ENCODE measurements at regions of chr6 and their contacts with region 1.

Region 1: DNA sequence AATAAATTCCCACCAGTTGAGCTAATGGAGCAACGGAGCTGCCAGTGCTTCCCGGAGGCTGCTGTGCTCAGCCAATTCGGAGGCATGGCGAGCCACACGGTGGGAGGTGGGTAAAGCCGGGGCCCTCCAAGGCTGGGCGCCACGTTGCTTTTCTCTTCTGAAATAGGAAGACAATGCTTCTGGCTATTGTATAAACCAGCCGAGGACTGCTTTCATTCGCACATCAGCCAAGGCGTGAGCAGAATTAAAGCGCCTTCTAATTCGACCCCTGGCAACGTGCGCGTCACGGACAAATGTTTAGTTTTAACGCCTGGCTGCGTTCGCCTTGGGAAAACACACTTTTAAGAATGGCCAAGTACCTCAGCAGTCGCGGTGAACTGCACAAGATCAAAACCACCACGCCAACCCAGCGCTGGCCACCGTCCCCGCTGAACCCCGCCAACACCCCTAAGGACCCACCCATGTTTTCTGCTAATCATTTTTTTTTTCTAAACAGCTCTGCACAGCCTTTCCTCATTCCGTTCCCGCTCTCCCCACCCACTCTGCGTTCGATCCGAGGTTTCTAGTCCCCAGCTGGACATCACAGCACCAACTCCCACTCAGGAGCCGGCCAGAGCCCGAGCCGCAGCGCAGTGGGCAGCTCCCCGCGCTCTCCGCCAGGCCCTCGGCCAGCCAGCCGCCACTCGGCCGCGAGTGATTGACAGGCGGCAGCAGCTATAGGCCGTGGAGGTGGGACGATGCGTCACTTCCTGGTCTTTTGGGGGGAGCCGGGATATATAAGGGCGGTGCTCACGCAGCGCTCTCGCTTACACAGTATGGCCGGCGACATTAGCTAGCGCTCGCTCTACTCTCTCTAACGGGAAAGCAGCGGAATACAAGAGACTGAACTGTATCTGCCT is at the start of gene AMD1:
- DNase-seq: peak; percentile 92
- ATAC-seq: peak; percentile 81
- H3K4me3 ChIP-seq: peak within 1 kb of the TSS; percentile 96
- H3K27ac ChIP-seq: peak within 1 kb of the TSS; percentile 60
- H3K4me1 ChIP-seq: peaks cover 7% of the 10 kb centered on the region
- H3K27me3 ChIP-seq: no peaks in the 10 kb centered on the region
- CTCF ChIP-seq: no peak
- total RNA-seq, gene AMD1: 56.2 and 72.5 TPM in 2 replicates

Region 2: GRCh38 chr6:110618591-110619267 is 255.5 kb before region 1 on chr6:
- CTCF ChIA-PET with region 1: interaction called, 3 read pairs
- POLR2A ChIA-PET with region 1: no interaction called
- intact Hi-C with region 1: loop called (anchors 2 kb)
- DNase-seq: peak; percentile 57
- ATAC-seq: peak; percentile 89
- H3K4me3 ChIP-seq: no peak overlapping the region
- H3K27ac ChIP-seq: peak overlapping the region; percentile 58
- H3K4me1 ChIP-seq: peaks cover 22% of the 10 kb centered on the region
- H3K27me3 ChIP-seq: no peaks in the 10 kb centered on the region
- CTCF ChIP-seq: peak; percentile 67

Region 3: GRCh38 chr6:110654096-110654820 is 220.0 kb before region 1 on chr6:
- CTCF ChIA-PET with region 1: interaction called, 18 read pairs
- POLR2A ChIA-PET with region 1: interaction called, 8 read pairs
- intact Hi-C with region 1: no loop called
- DNase-seq: peak; percentile 82
- ATAC-seq: peak; percentile 85
- H3K4me3 ChIP-seq: no peak overlapping the region
- H3K27ac ChIP-seq: peak overlapping the region; percentile 92
- H3K4me1 ChIP-seq: peaks cover 43% of the 10 kb centered on the region
- H3K27me3 ChIP-seq: no peaks in the 10 kb centered on the region
- CTCF ChIP-seq: no peak

Region 4: GRCh38 chr6:110815217-110816109 is 58.8 kb before region 1 on chr6 and contains the start of gene CDK19:
- CTCF ChIA-PET with region 1: interaction called, 6 read pairs
- POLR2A ChIA-PET with region 1: interaction called, 33 read pairs
- intact Hi-C with region 1: loop called (anchors 1 kb)
- DNase-seq: peak; percentile 96
- ATAC-seq: peak; percentile 87
- H3K4me3 ChIP-seq: peak within 1 kb of the TSS; percentile 94
- H3K27ac ChIP-seq: peak within 1 kb of the TSS; percentile 86
- H3K4me1 ChIP-seq: peaks cover 29% of the 10 kb centered on the region
- H3K27me3 ChIP-seq: no peaks in the 10 kb centered on the region
- CTCF ChIP-seq: no peak
- total RNA-seq, gene CDK19: 4.2 and 5.4 TPM in 2 replicates

Region 5: DNA sequence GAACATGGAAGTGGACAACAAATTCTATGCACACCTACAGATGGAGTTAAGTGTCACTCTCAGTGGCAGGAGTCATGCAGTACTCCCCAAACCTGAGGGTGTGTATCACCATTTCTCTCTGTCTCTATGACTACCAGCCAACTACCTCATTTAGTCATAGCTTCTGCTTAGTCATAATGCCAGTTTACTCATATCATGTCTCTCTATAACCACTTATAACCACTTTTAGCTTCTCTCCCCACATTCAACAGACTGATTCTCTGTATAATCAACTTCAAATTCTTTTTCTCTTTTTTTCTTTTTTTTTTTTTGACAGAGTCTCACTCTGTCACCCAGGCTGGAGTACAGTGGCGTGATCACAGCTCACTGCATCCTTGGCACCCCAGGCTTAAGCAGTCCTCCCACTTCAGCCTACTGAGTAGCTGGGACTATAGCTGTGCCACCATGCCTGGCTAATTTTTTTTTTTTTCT is 70.5 kb after region 1 on chr6:
- CTCF ChIA-PET with region 1: no interaction called
- POLR2A ChIA-PET with region 1: interaction called, 5 read pairs
- intact Hi-C with region 1: loop called (anchors 2 kb)
- DNase-seq: peak; percentile 89
- ATAC-seq: peak; percentile 99
- H3K4me3 ChIP-seq: peak overlapping the region; percentile 23; the same call in 1 of the 2 replicates
- H3K27ac ChIP-seq: peak overlapping the region; percentile 91
- H3K4me1 ChIP-seq: peaks cover 10% of the 10 kb centered on the region
- H3K27me3 ChIP-seq: no peaks in the 10 kb centered on the region
- CTCF ChIP-seq: no peak

Measured in PC-3 (cell line).